ENCODE measurements at regions of chr11 and their contacts with region 1.

Region 1: GRCh38 chr11:14300661-14301304 is 58.2 kb downstream of the RRAS2 start:
- DNase-seq: no peak
- ATAC-seq: peak; percentile 93

Region 2: GRCh38 chr11:13955971-13956421 is 344.8 kb before region 1 on chr11:
- intact Hi-C with region 1: no loop called
- DNase-seq: no peak
- ATAC-seq: peak; percentile 82

Region 3: GRCh38 chr11:14396273-14396672 is 95.5 kb after region 1 on chr11:
- intact Hi-C with region 1: no loop called
- DNase-seq: no peak
- ATAC-seq: no peak

Region 4: GRCh38 chr11:14454861-14455632 is 154.3 kb after region 1 on chr11:
- intact Hi-C with region 1: loop called (anchors 2 kb)
- DNase-seq: no peak
- ATAC-seq: peak; percentile 61